ENCODE measurements at regions of chr14 and their contacts with region 1.

Region 1: DNA sequence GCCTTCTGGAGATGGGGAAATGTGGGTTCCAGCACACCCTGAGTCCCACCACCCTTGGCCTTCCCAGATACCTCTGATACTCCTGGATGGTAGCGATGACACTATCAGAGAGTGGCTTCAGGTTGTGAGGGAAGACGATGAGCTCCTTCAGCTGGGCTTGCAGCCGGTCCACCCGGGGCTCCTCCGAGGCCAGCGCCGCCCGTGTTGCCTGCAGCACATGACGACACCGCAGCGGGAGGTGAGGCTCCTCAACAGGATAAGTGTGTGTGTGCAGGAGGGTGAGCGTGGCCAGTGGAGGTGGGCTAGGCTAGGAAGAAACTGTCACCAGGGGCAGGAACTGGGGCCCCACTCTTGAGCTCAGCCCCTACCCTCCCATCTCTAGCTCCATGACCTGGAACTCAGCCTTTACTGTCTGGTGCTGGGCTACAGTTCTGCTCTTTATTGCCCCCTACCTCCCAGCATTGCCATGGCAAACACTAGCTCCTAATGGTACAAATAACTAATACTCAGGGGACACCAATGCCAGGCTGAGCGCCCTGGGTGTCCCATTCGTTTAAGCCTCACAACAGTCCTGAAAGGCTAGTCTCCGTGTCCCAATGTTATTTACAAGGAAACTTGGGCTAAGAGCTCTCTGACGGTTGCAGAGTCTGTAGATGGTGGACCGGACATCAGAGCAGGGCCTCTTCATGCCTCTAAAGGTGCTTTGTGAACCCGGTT is 64.1 kb downstream of the SYNE3 start:
- DNase-seq: no peak
- H3K4me3 ChIP-seq: no peak overlapping the region
- H3K27ac ChIP-seq: no peak overlapping the region
- H3K4me1 ChIP-seq: peaks cover 14% of the 10 kb centered on the region
- H3K27me3 ChIP-seq: no peaks in the 10 kb centered on the region
- CTCF ChIP-seq: peak in 2 of 3 experiments; percentile 10 to 13
- POLR2A ChIP-seq: no peak

Region 2: DNA sequence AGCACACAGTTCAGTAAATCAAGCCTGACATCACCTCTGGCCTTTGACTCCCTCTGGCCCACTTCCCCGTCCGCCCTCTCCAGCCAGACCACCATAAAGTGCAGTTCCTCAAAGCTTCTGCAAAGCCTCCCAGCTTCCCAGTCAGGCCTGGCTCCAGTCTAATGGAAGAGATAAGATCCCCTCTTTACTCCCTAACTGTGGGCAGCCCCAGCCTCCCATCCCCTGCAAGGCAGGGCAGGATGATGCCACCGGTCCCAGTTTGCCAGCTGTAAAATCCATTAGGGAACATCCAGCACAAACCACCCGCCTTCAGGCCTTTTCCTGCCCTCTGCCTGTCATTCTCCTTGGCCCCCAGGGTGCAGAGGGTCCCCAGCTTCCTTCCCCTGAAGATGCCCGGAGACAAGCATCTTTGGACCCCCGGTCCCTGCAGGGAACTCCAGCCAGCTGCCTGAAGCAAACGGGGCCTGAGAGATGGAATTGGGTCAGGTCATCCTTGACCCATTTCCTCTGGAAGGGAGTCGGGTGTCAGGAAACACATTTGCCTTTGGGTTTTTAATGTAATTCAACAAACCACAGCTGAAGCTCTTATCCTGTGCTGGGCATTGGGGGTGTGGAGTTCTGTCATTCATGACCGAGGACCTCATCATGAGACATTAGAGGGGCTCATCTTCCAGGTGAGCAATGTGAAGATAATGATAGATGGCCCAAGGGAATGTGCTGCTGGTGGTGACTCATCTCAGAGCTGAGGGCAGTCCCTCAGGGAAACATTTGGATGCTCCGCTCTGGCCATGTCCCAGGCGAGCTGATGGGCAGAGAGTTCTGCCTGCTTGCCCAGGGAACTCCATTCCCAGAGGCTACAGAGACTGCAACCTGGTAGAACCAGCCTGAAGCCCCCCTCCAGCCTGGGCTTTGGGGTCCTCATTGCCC is 38.8 kb before region 1 on chr14:
- intact Hi-C with region 1: loop called (anchors 2 kb)
- DNase-seq: no peak
- H3K4me3 ChIP-seq: no peak overlapping the region
- H3K27ac ChIP-seq: no peak overlapping the region
- H3K4me1 ChIP-seq: peaks cover 9% of the 10 kb centered on the region
- H3K27me3 ChIP-seq: no peaks in the 10 kb centered on the region
- CTCF ChIP-seq: no peak
- POLR2A ChIP-seq: no peak

Region 3: DNA sequence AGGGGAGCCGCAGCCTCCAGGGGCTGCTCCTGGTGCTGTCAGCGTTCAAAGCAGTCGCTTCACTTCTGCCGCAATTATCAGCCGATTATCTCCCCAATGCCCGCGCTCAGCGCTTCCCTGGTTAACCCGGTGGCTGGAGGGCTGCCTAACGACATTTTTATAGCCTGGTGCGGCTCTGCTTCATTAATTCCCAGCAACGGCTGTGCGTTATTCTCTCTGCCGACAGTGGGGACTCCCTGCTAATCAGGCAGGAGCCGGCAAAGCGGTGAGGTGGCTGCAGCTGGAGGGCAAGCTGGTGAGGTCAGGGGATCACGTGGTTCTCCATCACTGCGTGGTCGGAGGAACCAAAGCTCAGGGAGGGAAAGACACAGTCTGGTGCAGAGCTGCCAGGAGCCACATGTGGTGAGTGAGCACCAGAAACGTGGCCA is 145.5 kb after region 1 on chr14:
- intact Hi-C with region 1: no loop called
- DNase-seq: no peak
- H3K4me3 ChIP-seq: no peak overlapping the region
- H3K27ac ChIP-seq: no peak overlapping the region
- H3K4me1 ChIP-seq: no peaks in the 10 kb centered on the region
- H3K27me3 ChIP-seq: no peaks in the 10 kb centered on the region
- CTCF ChIP-seq: no peak
- POLR2A ChIP-seq: no peak

Measured in testis (tissue), 5 donors.